ENCODE measurements at regions of chr19 and their contacts with region 1.

Region 1: DNA sequence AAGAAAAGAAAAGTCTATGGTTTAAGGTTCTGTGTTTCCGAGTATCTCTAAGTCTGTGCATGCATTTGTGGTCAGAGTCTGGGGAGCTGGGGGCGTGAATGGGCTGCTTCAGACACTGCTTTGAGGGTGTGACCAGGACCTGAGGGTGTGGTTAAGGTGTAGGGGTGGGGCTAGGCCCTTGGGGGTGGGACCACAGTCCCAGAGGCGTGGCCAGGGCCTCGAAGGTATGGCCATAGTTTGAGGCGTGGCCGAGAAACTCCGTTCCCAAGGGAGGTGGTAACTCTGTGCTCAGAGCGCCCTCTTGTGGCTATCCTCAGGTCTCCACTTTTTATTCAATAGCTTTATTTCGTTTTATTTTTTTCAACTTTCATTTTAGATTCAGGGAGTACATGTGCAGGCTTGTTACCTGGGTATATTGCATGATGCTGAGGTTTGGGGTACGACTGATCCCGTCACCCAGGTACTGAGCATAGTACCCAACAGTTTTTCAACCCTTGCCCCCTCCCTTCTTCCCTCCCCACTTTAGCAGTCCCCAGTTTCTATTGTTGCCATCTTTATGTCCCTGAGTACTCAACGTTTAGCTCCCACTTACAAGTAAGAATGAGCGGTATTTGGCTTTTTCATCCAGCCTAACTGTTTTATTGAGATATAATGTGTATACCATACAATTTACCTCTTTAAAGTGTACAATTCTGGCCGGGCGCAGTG is 7.0 kb upstream of the CBLC start:
- DNase-seq: peak; percentile 95
- H3K4me3 ChIP-seq: no peak overlapping the region
- H3K27ac ChIP-seq: no peak overlapping the region
- H3K4me1 ChIP-seq: peaks cover 12% of the 10 kb centered on the region
- H3K27me3 ChIP-seq: no peaks in the 10 kb centered on the region
- CTCF ChIP-seq: peak; percentile 67 to 73
- POLR2A ChIP-seq: no peak

Region 2: GRCh38 chr19:44587963-44588770 is 182.5 kb before region 1 on chr19:
- CTCF ChIA-PET with region 1: interaction called, 18 read pairs
- POLR2A ChIA-PET with region 1: no interaction called
- dilution Hi-C with region 1: no loop called
- intact Hi-C with region 1: no loop called
- DNase-seq: peak; percentile 77
- H3K4me3 ChIP-seq: peak overlapping the region in 1 of 3 experiments; percentile 1
- H3K27ac ChIP-seq: peak overlapping the region; percentile 93
- H3K4me1 ChIP-seq: peaks cover 55% of the 10 kb centered on the region
- H3K27me3 ChIP-seq: no peaks in the 10 kb centered on the region
- CTCF ChIP-seq: peak in 1 of 2 donors; percentile 12
- POLR2A ChIP-seq: no peak

Region 3: DNA sequence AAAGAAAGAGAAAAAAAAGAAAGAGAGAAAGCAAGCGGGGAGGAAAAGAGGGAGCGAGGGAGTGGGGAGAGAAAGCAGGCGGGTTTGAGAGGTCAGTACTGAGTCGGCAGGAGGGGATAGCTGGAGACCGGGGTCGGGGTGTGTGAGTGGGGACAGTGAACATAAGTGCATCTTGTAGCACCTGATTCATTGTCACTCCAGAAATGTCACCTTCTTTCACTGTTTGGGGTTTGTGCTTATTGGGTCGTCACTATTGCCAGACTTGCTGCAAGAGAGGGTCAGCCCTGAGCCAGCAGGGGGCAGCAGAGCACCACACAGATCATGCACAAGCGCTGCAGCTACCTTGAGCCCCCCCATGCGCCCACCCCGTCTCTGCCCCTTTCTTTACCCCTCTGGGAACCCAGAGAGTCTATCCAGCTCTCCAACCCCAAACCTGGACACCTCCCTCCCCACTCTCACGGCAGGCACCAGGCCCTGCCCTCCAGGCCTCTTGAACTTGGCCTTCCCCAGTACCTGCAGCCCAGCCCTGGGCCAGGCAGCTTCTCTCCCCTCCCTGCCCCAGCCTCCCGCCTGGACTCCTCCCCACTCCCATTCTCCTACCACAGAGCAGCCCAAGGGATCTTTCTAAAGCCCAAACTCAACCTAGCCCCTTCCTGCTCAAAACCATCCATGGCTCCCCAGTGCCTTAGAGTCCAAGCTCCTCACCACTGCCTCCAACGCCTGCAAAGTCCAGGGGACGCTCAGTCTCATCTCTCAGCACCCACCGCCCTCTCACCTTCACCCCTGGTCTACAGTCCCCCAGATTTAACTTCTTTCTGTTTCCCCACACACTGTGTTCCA is 81.4 kb before region 1 on chr19:
- CTCF ChIA-PET with region 1: interaction called, 166 read pairs
- POLR2A ChIA-PET with region 1: interaction called, 11 read pairs
- dilution Hi-C with region 1: no loop called
- intact Hi-C with region 1: loop called (anchors 1 kb)
- DNase-seq: peak; percentile 70
- H3K4me3 ChIP-seq: no peak overlapping the region
- H3K27ac ChIP-seq: no peak overlapping the region
- H3K4me1 ChIP-seq: peaks cover 30% of the 10 kb centered on the region
- H3K27me3 ChIP-seq: no peaks in the 10 kb centered on the region
- CTCF ChIP-seq: peak; percentile 79 to 96
- POLR2A ChIP-seq: no peak

Region 4: DNA sequence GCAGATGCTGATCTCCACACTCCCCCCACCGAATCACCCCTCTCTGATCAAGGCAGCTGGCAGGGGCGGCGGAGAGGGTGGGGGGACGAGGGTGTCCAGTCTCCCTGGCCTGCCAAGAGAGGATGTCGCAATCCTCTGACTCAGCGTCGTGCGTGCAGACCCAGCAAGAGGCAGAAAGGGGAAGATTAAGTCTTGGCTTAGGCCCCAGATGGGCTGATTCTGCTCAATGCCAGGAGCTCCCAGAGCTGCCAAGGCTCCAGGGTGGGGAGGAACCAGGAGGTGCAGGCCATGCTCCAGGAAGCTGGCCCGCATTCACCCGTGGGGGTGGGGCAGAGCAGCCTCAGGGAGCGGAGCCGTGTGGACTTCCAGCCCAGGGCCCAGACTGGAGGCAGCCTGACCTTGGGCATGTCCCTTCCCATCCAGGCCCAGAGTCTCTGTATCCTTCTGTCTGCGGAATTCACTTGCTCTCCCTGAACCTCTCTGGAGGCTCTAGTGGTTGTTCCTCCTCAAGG is 28.8 kb before region 1 on chr19:
- CTCF ChIA-PET with region 1: interaction called, 12 read pairs
- POLR2A ChIA-PET with region 1: no interaction called
- dilution Hi-C with region 1: no loop called
- intact Hi-C with region 1: loop called (anchors 1 kb)
- DNase-seq: peak; percentile 98
- H3K4me3 ChIP-seq: no peak overlapping the region
- H3K27ac ChIP-seq: peak overlapping the region; percentile 96
- H3K4me1 ChIP-seq: peaks cover 25% of the 10 kb centered on the region
- H3K27me3 ChIP-seq: no peaks in the 10 kb centered on the region
- CTCF ChIP-seq: no peak
- POLR2A ChIP-seq: peak; percentile 83

Region 5: GRCh38 chr19:44782729-44783128 is 12.0 kb after region 1 on chr19:
- CTCF ChIA-PET with region 1: interaction called, 23 read pairs
- POLR2A ChIA-PET with region 1: no interaction called
- dilution Hi-C with region 1: no loop called
- intact Hi-C with region 1: no loop called
- DNase-seq: no peak
- H3K4me3 ChIP-seq: no peak overlapping the region
- H3K27ac ChIP-seq: no peak overlapping the region
- H3K4me1 ChIP-seq: no peaks in the 10 kb centered on the region
- H3K27me3 ChIP-seq: no peaks in the 10 kb centered on the region
- CTCF ChIP-seq: no peak
- POLR2A ChIP-seq: no peak

Region 6: GRCh38 chr19:45200568-45200994 is 429.9 kb after region 1 on chr19:
- CTCF ChIA-PET with region 1: no interaction called
- POLR2A ChIA-PET with region 1: no interaction called
- dilution Hi-C with region 1: no loop called
- intact Hi-C with region 1: no loop called
- DNase-seq: peak; percentile 73
- H3K4me3 ChIP-seq: no peak overlapping the region
- H3K27ac ChIP-seq: no peak overlapping the region
- H3K4me1 ChIP-seq: peaks cover 4% of the 10 kb centered on the region
- H3K27me3 ChIP-seq: no peaks in the 10 kb centered on the region
- CTCF ChIP-seq: peak; percentile 52 to 60
- POLR2A ChIP-seq: no peak

Measured in endothelial cell of umbilical vein (primary cell).